Heart right ventricle (tissue), 16 donors: ENCODE measurements at regions of chr13 and their contacts with region 1.

Region 1: GRCh38 chr13:91133941-91134802 is 213.3 kb upstream of the MIR17HG start:
- DNase-seq: peak in 1 of 2 donors; percentile 48
- ATAC-seq: peak in 7 of 8 donors; percentile 46 to 77 (median 67)
- H3K4me3 ChIP-seq: no peak overlapping the region
- H3K27ac ChIP-seq: no peak overlapping the region
- H3K4me1 ChIP-seq: peaks cover 0 to 11% (median 0%) of the 10 kb centered on the region in 9 donors
- H3K27me3 ChIP-seq: no peaks in the 10 kb centered on the region
- CTCF ChIP-seq: peak; percentile 36 to 81 (median 73)

Region 2: DNA sequence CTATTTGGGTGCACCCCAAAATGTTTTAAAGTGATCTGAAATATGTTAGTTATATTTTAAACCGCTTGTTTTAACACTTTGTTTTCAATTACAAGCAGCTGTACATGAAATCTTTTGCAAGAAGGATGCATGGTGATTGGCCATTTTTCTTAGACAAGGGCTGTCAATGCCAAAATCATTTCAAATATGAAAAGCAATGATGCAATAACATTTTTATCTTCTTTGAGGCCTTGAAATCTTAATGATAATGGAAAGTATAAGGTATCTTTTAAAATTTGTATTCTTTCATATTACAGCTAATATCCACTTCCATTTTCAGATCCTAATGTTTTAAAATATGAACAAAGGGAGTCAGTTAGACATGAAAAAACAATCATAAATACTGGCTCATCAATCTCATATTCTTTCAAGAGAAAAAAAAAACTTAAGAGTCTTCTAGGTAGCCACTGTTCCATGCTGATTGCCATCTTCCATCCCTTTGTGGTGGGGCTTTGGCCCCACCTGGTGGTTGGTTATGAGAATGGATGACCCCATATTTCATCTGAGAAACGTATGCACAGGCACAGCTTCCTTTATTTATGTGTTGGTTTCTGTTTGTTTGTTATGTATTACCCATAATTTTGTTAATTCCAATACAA is 117.0 kb before region 1 on chr13:
- intact Hi-C with region 1: no loop called
- DNase-seq: no peak
- ATAC-seq: peak in 1 of 8 donors; percentile 50
- H3K4me3 ChIP-seq: no peak overlapping the region
- H3K27ac ChIP-seq: no peak overlapping the region
- H3K4me1 ChIP-seq: no peaks in the 10 kb centered on the region
- H3K27me3 ChIP-seq: peaks cover 0 to 4% (median 0%) of the 10 kb centered on the region in 7 donors
- CTCF ChIP-seq: peak in 8 of 9 donors; percentile 28 to 70 (median 62)

Region 3: DNA sequence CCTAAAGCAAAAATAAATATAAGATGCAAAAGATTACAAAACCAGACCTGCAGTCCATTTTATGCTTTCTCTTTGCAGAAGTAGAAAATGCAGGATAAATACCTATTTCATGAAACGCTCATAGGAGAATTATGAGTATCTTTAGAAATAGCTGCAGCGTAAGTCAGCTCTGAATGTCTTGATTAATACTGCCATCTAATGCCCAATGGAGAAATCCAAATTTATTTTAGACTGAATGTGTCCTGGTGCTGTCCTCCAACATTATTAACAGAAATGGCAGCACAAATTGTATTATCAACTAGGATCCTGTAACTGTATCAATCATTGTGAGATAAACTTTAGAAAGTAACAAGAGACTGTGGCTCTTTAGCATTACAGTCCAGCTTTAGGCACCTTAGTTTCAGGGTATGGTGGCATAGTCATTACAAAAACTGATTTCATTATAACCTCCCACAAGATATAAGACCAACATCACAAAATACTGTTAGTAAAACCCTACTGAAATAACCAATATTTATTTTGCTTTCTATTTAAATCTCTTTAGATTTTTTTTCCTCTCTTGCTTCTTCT is 51.2 kb after region 1 on chr13:
- intact Hi-C with region 1: loop called in 9 of 10 experiments (anchors 1 to 10 kb)
- DNase-seq: no peak
- ATAC-seq: peak in 1 of 8 donors; percentile 55
- H3K4me3 ChIP-seq: no peak overlapping the region
- H3K27ac ChIP-seq: no peak overlapping the region
- H3K4me1 ChIP-seq: no peaks in the 10 kb centered on the region
- H3K27me3 ChIP-seq: peaks cover 0 to 13% (median 0%) of the 10 kb centered on the region in 7 donors
- CTCF ChIP-seq: peak in 7 of 9 donors; percentile 26 to 54 (median 39)